ENCODE measurements at regions of chr13 and their contacts with region 1.

Region 1: GRCh38 chr13:99288089-99288488 is 19.1 kb downstream of the GPR183 start:
- DNase-seq: no peak
- H3K4me3 ChIP-seq: no peak overlapping the region
- H3K4me3 Mint-ChIP-seq: peak overlapping the region; percentile 33 to 84 (median 60)
- H3K27ac ChIP-seq: peak overlapping the region; percentile 18
- H3K27ac Mint-ChIP-seq: peak overlapping the region; percentile 88 to 95 (median 89)
- H3K4me1 ChIP-seq: peaks cover 95% of the 10 kb centered on the region
- H3K4me1 Mint-ChIP-seq: peaks cover 65 to 100% (median 81%) of the 10 kb centered on the region in 4 donors
- H3K27me3 ChIP-seq: no peaks in the 10 kb centered on the region
- H3K27me3 Mint-ChIP-seq: no peaks in the 10 kb centered on the region

Region 2: DNA sequence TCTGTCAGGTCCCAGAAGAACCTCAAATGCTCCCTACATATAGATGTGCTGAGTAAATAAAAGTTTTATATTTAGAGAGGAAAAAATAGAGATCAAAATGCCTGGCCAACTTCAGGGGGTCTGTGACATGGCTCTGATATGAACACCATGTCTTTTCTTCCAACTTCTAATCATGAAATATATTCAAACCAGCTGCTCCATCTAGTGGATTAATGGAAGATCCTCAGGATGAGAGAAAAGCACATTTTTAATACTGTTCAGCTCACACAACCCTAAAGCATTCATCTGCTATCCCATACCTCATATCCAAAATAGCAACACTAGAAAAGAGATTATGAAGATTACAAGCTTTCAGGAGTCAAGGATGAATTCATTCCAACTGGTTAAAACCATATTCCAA is 254.3 kb before region 1 on chr13:
- CTCF ChIA-PET with region 1: no interaction called
- POLR2A ChIA-PET with region 1: no interaction called
- intact Hi-C with region 1: no loop called
- DNase-seq: peak in 2 of 5 donors; percentile 21 to 28
- H3K4me3 ChIP-seq: no peak overlapping the region
- H3K4me3 Mint-ChIP-seq: no peak overlapping the region
- H3K27ac ChIP-seq: no peak overlapping the region
- H3K27ac Mint-ChIP-seq: peak overlapping the region in 3 of 7 donors; percentile 55 to 85 (median 63)
- H3K4me1 ChIP-seq: peaks cover 22% of the 10 kb centered on the region
- H3K4me1 Mint-ChIP-seq: peaks cover 32 to 76% (median 51%) of the 10 kb centered on the region in 4 donors
- H3K27me3 ChIP-seq: no peaks in the 10 kb centered on the region
- H3K27me3 Mint-ChIP-seq: no peaks in the 10 kb centered on the region

Region 3: DNA sequence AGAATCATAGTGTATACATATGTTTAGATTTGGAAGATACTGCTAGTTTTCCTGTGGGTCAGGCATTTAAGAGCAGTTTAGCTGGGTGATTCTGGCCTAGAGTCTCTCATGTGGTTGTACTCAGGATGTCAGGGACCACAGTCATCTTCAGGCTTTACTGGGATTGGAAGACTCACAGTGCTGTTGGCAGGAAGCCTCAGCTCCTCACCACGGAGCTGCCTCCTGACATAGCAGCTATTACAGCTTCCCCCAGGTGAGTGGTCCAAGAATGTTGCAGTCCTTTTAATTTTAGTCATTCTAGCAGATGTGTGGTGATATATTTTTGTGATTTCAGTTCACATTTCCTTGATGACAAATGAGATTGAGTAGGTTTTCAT is 13.0 kb before region 1 on chr13:
- CTCF ChIA-PET with region 1: interaction called, 139 read pairs
- POLR2A ChIA-PET with region 1: interaction called, 406 read pairs
- intact Hi-C with region 1: loop called (anchors 1 kb)
- DNase-seq: peak; percentile 46 to 67 (median 54)
- H3K4me3 ChIP-seq: peak overlapping the region in 1 of 2 donors; percentile 3
- H3K4me3 Mint-ChIP-seq: peak overlapping the region in 7 of 8 donors; percentile 43 to 86 (median 74)
- H3K27ac ChIP-seq: peak overlapping the region; percentile 11
- H3K27ac Mint-ChIP-seq: peak overlapping the region; percentile 80 to 98 (median 94)
- H3K4me1 ChIP-seq: peaks cover 93% of the 10 kb centered on the region
- H3K4me1 Mint-ChIP-seq: peaks cover 79 to 99% (median 89%) of the 10 kb centered on the region in 4 donors
- H3K27me3 ChIP-seq: no peaks in the 10 kb centered on the region
- H3K27me3 Mint-ChIP-seq: no peaks in the 10 kb centered on the region

Region 4: DNA sequence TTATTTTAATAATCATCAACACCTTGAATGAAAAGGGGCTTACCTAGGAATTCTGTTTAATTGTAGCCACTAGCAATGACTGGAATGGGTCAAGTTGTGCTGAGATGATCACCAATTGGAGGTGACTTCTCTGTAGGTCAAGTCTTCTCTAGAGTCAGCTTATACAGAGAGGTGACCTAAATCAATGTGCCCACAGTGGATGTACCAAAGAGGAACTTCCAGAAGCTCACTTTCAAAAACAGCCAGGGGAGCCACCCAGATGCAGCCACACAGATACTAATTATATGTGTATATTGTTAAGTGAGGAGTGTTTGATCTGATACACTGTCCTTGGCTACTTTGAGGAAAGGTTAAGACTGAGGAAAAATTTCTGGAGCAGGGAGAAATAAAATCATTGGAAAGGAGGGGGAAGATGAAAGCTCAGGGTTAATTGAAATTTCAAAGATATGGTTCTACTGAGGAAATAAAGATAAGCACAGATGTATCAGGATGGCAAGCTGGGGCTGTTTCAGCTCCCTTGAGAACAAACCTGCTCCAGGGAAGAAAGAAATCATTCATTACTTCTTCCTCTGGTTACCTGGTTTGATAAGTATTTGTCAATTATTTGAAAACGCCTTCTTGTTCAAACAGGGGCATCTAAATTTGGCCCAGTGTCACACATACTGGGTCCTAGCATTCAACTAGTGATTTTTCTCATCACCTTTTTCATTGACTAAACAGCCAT is 14.0 kb after region 1 on chr13:
- CTCF ChIA-PET with region 1: interaction called, 12 read pairs
- POLR2A ChIA-PET with region 1: interaction called, 406 read pairs
- intact Hi-C with region 1: loop called (anchors 1 kb)
- DNase-seq: no peak
- H3K4me3 ChIP-seq: peak overlapping the region; percentile 78 to 80
- H3K4me3 Mint-ChIP-seq: peak overlapping the region; percentile 88 to 100 (median 99)
- H3K27ac ChIP-seq: peak overlapping the region; percentile 77
- H3K27ac Mint-ChIP-seq: peak overlapping the region; percentile 88 to 99 (median 96)
- H3K4me1 ChIP-seq: peaks cover 74% of the 10 kb centered on the region
- H3K4me1 Mint-ChIP-seq: peaks cover 45 to 77% (median 55%) of the 10 kb centered on the region in 4 donors
- H3K27me3 ChIP-seq: no peaks in the 10 kb centered on the region
- H3K27me3 Mint-ChIP-seq: no peaks in the 10 kb centered on the region

Region 5: DNA sequence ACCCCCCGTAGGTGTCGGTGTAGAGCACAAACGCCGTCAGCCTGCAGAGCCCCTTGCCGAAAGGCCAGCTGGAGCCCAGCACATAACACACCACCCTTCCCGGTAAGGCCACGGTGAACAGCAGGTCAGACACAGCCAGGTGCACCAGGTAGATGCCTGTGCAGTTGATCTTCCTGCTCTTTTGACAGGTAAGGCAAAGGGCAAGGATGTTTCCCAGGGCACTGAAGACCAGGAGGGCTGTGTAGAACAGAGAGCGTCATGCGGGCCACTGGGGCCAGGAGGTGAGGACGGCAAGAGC is 120.6 kb after region 1 on chr13:
- CTCF ChIA-PET with region 1: no interaction called
- POLR2A ChIA-PET with region 1: no interaction called
- intact Hi-C with region 1: no loop called
- DNase-seq: no peak
- H3K4me3 ChIP-seq: no peak overlapping the region
- H3K4me3 Mint-ChIP-seq: no peak overlapping the region
- H3K27ac ChIP-seq: no peak overlapping the region
- H3K27ac Mint-ChIP-seq: peak overlapping the region in 1 of 7 donors; percentile 43
- H3K4me1 ChIP-seq: peaks cover 4% of the 10 kb centered on the region
- H3K4me1 Mint-ChIP-seq: peaks cover 9 to 12% (median 11%) of the 10 kb centered on the region in 4 donors
- H3K27me3 ChIP-seq: no peaks in the 10 kb centered on the region
- H3K27me3 Mint-ChIP-seq: no peaks in the 10 kb centered on the region

Region 6: GRCh38 chr13:99925999-99926731 is 638.1 kb after region 1 on chr13:
- CTCF ChIA-PET with region 1: no interaction called
- POLR2A ChIA-PET with region 1: no interaction called
- intact Hi-C with region 1: no loop called
- DNase-seq: no peak
- H3K4me3 ChIP-seq: no peak overlapping the region
- H3K4me3 Mint-ChIP-seq: no peak overlapping the region
- H3K27ac ChIP-seq: no peak overlapping the region
- H3K27ac Mint-ChIP-seq: no peak overlapping the region
- H3K4me1 ChIP-seq: no peaks in the 10 kb centered on the region
- H3K4me1 Mint-ChIP-seq: peaks cover 0 to 4% (median under 1%) of the 10 kb centered on the region in 4 donors
- H3K27me3 ChIP-seq: no peaks in the 10 kb centered on the region
- H3K27me3 Mint-ChIP-seq: peaks cover 21 to 43% of the 10 kb centered on the region in 2 donors